Activated CD8-positive, alpha-beta T cell treated with anti-CD3 and anti-CD28 coated beads for 36 hours (primary cell): ENCODE measurements at regions of chr4 and their contacts with region 1.

Region 1: DNA sequence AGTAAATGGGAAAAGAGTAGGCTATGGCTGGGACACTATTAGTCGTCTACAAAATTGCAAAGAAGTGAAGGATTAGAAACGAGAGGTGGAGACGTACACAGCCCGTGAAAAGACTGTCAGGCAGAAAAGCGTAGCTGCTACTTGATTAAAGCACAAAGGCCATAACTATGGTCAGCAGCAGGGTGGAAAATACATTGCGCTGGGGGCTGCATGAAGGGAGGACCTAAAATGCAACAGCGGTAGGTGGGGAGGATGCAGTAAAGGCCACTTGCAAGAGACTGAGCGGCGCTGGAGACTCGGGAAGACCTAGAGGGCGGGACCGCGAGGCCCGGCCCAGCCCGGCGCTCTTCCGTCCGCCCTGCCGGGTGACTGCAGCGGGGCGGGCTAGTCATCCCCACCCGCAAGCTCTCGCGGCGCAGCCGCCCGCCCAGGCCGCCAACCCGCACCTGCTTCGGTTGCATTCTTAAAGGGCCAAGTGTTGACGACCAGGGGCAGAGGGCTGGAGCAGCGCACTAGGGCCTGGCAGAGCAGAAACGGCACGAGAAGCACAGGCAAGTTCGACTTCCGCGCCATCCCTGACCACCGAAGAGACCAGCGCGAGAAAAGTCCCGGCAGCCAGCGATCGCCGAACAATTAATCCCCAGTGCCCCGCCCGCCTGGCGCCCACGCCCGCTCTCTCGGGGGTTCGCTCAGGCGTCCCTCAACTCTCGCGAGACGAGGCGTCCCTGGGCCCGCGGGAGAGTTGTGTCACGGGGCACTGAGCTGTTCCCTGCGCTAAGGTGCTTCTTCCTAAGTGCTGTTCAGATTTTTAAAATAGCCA is at the start of gene AGA:
- DNase-seq: peak; percentile 98
- ATAC-seq: peak; percentile 92
- H3K4me3 Mint-ChIP-seq: peak within 1 kb of the TSS; percentile 92
- H3K27ac Mint-ChIP-seq: peak within 1 kb of the TSS; percentile 98
- H3K4me1 Mint-ChIP-seq: peaks cover 31% of the 10 kb centered on the region
- H3K27me3 Mint-ChIP-seq: no peaks in the 10 kb centered on the region
- CTCF ChIP-seq: no peak
- total RNA-seq, gene AGA: 19.7 to 21.8 TPM

Region 2: DNA sequence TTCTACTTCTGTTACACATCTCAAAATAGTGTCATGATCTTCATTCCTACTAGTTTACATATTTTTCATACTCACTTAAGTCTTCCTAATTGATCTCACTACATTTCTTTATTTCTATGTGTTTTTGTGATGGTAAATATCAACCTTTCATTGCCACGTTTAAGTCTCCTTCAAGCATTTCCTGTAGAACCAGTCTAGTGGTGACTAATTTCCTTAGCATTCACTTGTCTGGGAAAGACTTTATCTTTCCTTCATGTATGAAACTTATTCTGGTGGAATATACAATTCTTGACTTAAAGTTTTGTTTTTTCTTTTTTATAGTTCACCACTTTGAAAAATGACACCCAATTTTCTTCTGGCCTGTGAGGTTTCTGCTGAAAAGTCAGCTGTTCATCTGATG is 313.7 kb before region 1 on chr4:
- CTCF ChIA-PET with region 1: no interaction called
- POLR2A ChIA-PET with region 1: no interaction called
- intact Hi-C with region 1: no loop called
- DNase-seq: no peak
- ATAC-seq: no peak
- H3K4me3 Mint-ChIP-seq: no peak overlapping the region
- H3K27ac Mint-ChIP-seq: no peak overlapping the region
- H3K4me1 Mint-ChIP-seq: no peaks in the 10 kb centered on the region
- H3K27me3 Mint-ChIP-seq: peaks cover 1% of the 10 kb centered on the region
- CTCF ChIP-seq: no peak

Region 3: GRCh38 chr4:177309522-177310371 is 132.3 kb before region 1 on chr4 and contains the start of gene NEIL3:
- CTCF ChIA-PET with region 1: no interaction called
- POLR2A ChIA-PET with region 1: interaction called, 17 read pairs
- intact Hi-C with region 1: loop called (anchors 2 kb)
- DNase-seq: peak; percentile 98
- ATAC-seq: peak; percentile 85
- H3K4me3 Mint-ChIP-seq: peak within 1 kb of the TSS; percentile 90
- H3K27ac Mint-ChIP-seq: peak within 1 kb of the TSS; percentile 82
- H3K4me1 Mint-ChIP-seq: peaks cover 29% of the 10 kb centered on the region
- H3K27me3 Mint-ChIP-seq: no peaks in the 10 kb centered on the region
- CTCF ChIP-seq: no peak
- total RNA-seq, gene NEIL3: 16.6 to 18.7 TPM

Region 4: DNA sequence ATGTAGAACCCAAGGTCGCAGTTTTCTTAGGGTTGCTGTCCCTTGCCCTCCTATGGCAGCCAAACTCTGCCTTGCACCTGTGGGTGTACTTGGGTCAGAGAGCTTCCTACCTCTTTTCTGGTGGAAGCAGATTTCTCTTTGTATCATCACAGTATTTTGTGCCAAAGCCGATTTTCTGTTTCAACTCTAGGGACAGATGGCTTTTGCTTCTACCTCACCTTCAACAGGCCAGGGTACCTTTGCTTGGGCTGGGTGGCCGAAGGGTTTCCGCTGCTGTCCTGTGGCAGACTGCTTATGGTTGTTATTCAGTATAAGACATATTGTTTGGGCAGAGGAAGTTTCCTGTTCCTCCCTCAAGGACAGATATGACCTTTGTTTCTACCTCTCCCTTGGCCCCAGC is 109.9 kb before region 1 on chr4:
- CTCF ChIA-PET with region 1: no interaction called
- POLR2A ChIA-PET with region 1: no interaction called
- intact Hi-C with region 1: no loop called
- DNase-seq: no peak
- ATAC-seq: no peak
- H3K4me3 Mint-ChIP-seq: no peak overlapping the region
- H3K27ac Mint-ChIP-seq: no peak overlapping the region
- H3K4me1 Mint-ChIP-seq: no peaks in the 10 kb centered on the region
- H3K27me3 Mint-ChIP-seq: no peaks in the 10 kb centered on the region
- CTCF ChIP-seq: no peak

Region 5: DNA sequence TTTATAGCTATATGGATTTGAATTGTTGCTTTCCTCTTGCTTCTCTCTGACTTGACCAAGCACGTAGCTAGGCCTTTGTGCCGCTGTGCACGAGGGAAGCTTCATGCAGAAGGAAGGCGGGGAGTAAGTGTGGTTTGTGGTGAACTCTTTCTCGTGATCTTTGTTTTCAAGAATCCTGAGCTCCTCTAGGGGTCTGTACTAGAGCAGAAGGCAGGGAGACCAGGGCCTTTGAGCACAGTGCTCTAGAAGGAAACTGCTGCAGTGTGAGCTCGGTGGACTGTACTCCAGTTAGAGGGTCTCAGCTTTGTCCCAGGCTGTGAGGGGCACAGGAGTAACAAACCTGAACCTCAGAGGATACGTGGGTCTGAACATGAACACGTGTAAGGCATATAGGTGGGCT is 48.8 kb before region 1 on chr4:
- CTCF ChIA-PET with region 1: interaction called, 6 read pairs
- POLR2A ChIA-PET with region 1: interaction called, 14 read pairs
- intact Hi-C with region 1: no loop called
- DNase-seq: peak; percentile 76
- ATAC-seq: peak; percentile 88
- H3K4me3 Mint-ChIP-seq: peak overlapping the region; percentile 7
- H3K27ac Mint-ChIP-seq: peak overlapping the region; percentile 18
- H3K4me1 Mint-ChIP-seq: peaks cover 28% of the 10 kb centered on the region
- H3K27me3 Mint-ChIP-seq: no peaks in the 10 kb centered on the region
- CTCF ChIP-seq: no peak

Region 6: GRCh38 chr4:177427192-177427591 is 14.8 kb before region 1 on chr4:
- CTCF ChIA-PET with region 1: no interaction called
- POLR2A ChIA-PET with region 1: interaction called, 15 read pairs
- intact Hi-C with region 1: no loop called
- DNase-seq: no peak
- ATAC-seq: no peak
- H3K4me3 Mint-ChIP-seq: no peak overlapping the region
- H3K27ac Mint-ChIP-seq: no peak overlapping the region
- H3K4me1 Mint-ChIP-seq: no peaks in the 10 kb centered on the region
- H3K27me3 Mint-ChIP-seq: no peaks in the 10 kb centered on the region
- CTCF ChIP-seq: no peak

Region 7: DNA sequence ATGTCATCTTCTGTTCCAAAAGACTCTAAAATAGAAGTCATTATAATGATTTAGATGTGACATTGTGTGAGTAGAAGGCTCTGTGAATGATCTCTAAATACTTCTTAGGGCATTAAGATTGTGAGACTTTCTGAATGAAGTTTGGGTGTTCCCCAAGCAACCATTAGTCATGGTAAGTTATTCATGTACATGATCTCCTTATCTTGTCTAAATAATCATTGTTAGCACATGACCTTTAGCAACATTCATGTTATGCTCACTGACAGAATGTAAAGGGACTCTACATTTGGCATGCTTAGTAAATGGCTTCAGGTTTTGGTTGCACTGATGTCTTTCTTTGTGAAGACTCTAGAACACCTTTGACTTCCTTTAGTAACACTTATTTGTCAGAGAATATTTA is 141.0 kb after region 1 on chr4:
- CTCF ChIA-PET with region 1: no interaction called
- POLR2A ChIA-PET with region 1: no interaction called
- intact Hi-C with region 1: no loop called
- DNase-seq: no peak
- ATAC-seq: no peak
- H3K4me3 Mint-ChIP-seq: no peak overlapping the region
- H3K27ac Mint-ChIP-seq: no peak overlapping the region
- H3K4me1 Mint-ChIP-seq: no peaks in the 10 kb centered on the region
- H3K27me3 Mint-ChIP-seq: no peaks in the 10 kb centered on the region
- CTCF ChIP-seq: no peak